AG04449 (cell line): ENCODE measurements at regions of chr19 and their contacts with region 1.

Region 1: DNA sequence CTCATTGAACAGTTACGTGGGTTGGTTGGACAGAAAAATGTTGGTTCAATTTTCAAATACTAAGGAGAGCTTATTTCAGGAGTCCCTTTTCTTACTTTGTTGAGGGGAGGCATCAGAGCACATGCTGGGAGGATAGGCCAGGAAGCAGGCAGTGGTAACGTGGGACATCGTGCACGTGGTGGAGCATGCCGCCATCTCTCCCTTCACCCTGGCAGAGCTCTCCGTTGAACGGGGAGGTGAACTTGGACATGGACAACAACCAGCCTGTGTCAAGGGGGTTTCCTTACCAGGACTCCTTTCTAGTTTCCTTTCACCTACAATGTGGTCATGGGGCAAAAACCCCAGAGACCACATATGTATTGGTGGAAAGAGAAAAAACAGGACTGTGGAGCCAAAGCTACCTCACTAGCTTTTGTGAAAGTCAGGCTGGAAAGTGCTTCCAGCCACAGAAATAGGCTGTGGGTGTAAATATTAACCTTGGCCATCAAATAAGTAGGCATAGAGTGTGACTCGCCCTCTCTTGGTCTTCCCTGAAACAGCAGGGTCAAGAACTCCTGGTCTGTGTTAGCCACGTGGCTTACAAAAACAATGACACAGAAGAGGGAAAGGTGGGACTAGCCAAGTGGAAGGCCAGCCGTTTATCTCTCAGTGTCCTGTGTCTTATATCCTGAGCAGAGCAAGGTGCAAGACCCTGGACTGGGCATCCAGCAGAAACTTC is 14.4 kb downstream of the MICOS13 start:
- DNase-seq: peak; percentile 34
- H3K4me3 ChIP-seq: no peak overlapping the region
- CTCF ChIP-seq: peak; percentile 33

Region 2: GRCh38 chr19:5642204-5642603 is 23.8 kb before region 1 on chr19:
- CTCF ChIA-PET with region 1: no interaction called
- POLR2A ChIA-PET with region 1: no interaction called
- DNase-seq: no peak
- H3K4me3 ChIP-seq: no peak overlapping the region
- CTCF ChIP-seq: no peak

Region 3: DNA sequence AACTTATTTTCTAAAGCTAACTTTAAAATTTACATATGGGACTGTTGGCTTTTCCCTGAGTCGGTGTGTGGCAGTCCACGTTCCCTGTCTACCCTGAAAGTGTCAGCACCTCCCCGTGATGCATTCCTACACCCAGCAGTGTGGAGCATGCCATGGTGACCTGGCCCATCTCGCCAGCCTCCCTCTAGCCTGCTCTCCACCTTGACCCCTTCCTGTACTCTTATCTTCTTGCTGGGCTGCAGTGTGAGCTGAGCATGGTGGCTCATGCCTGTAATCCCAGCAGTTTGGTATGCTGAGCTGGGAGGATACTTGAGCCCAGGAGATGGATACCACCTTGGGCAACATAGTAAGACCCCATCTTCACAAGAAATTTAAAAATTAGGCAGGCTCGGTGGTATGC is 11.0 kb before region 1 on chr19:
- CTCF ChIA-PET with region 1: interaction called, 10 read pairs
- POLR2A ChIA-PET with region 1: no interaction called
- DNase-seq: no peak
- H3K4me3 ChIP-seq: no peak overlapping the region
- CTCF ChIP-seq: no peak

Region 4: GRCh38 chr19:5738426-5738825 is 72.5 kb after region 1 on chr19:
- CTCF ChIA-PET with region 1: no interaction called
- POLR2A ChIA-PET with region 1: no interaction called
- DNase-seq: no peak
- H3K4me3 ChIP-seq: no peak overlapping the region
- CTCF ChIP-seq: no peak

Region 5: GRCh38 chr19:5809053-5809452 is 143.1 kb after region 1 on chr19:
- CTCF ChIA-PET with region 1: no interaction called
- POLR2A ChIA-PET with region 1: no interaction called
- DNase-seq: no peak
- H3K4me3 ChIP-seq: no peak overlapping the region
- CTCF ChIP-seq: no peak